T-cell (primary cell): ENCODE measurements at regions of chr13 and their contacts with region 1.

Region 1: DNA sequence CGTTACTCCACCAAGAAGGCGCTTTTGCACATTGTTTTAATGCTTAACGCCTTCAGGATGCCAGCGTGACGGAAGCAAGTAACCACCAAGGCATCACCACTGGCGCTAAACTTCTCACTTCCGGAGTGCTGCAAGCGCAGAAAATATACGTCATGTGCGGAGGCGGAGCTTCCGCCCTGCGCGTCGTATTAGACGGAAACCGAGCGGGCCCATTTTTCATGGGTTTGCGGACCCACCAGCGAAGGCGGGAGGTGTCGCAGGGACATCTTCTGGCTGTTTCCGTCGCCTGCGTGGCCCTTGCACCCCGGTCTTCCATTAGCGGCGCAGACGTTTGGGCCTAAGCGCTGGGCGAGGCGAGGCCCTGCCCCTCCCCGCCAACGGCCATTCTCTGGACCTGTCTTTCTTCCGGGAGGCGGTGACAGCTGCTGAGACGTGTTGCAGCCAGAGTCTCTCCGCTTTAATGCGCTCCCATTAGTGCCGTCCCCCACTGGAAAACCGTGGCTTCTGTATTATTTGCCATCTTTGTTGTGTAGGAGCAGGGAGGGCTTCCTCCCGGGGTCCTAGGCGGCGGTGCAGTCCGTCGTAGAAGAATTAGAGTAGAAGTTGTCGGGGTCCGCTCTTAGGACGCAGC is at the start of gene ERCC5:
- DNase-seq: peak; percentile 92 to 99 (median 95)
- ATAC-seq: peak; percentile 78 to 82 (median 80)
- H3K4me3 ChIP-seq: peak within 1 kb of the TSS; percentile 78 to 100
- H3K4me3 Mint-ChIP-seq: peak within 1 kb of the TSS; percentile 91 to 98 (median 93)
- H3K27ac ChIP-seq: peak within 1 kb of the TSS; percentile 98
- H3K27ac Mint-ChIP-seq: peak within 1 kb of the TSS; percentile 98 to 99
- H3K4me1 ChIP-seq: peaks cover 17 to 24% of the 10 kb centered on the region in 2 experiments
- H3K4me1 Mint-ChIP-seq: peaks cover 41 to 50% (median 49%) of the 10 kb centered on the region in 3 donors
- H3K27me3 ChIP-seq: no peaks in the 10 kb centered on the region
- H3K27me3 Mint-ChIP-seq: no peaks in the 10 kb centered on the region
- total RNA-seq, gene ERCC5: 104 to 123 (median 114) TPM

Region 2: DNA sequence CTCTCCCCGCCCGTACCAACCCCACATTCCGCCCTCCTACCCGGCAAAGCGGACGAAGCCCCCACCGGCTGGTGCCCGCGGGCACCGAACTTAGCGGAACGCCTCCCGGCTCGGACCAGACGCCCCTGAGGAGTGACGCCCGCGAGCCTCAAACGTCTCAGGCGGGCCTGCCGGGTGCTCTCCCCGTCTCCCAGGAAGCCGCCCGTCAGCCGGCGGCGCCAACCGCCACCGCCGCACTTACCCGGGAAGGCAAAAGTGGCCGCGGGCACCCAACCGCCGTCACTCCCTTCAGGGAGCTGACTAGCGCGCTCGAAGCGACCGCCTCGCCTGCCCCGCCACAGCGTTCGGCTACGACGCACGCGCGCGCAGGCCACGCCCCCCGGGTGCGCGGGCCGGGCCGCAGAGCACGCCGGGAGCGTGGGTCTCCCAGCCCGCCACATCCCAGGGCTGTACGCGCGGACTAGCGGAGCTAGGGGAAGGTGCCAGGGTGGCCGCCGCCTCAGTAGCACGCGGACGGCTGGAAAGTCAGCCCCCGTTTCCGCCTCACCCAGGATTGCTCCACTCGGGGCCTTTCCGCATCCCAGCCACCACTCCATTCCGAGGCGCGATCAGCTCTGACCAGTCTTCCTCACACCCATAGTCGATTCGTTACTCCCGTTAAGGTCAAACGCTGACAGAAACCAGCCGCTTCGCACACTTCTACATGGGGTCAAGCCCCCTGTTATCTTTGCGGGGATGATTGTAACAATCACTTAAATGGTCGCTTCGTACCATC is 72.1 kb before region 1 on chr13 and contains the start of gene TEX30:
- CTCF ChIA-PET with region 1: interaction called in 1 of 2 experiments, 6 read pairs
- POLR2A ChIA-PET with region 1: interaction called, 5 to 10 read pairs
- DNase-seq: peak; percentile 72 to 94 (median 82)
- ATAC-seq: peak; percentile 96 to 98 (median 97)
- H3K4me3 ChIP-seq: peak within 1 kb of the TSS; percentile 85 to 91
- H3K4me3 Mint-ChIP-seq: peak within 1 kb of the TSS; percentile 88 to 94 (median 89)
- H3K27ac ChIP-seq: peak within 1 kb of the TSS; percentile 82
- H3K27ac Mint-ChIP-seq: peak within 1 kb of the TSS; percentile 89 to 92
- H3K4me1 ChIP-seq: peaks cover 2 to 19% of the 10 kb centered on the region in 2 experiments
- H3K4me1 Mint-ChIP-seq: peaks cover 22 to 49% (median 47%) of the 10 kb centered on the region in 3 donors
- H3K27me3 ChIP-seq: no peaks in the 10 kb centered on the region
- H3K27me3 Mint-ChIP-seq: no peaks in the 10 kb centered on the region
- total RNA-seq, gene TEX30: 5.5 to 8.6 (median 7.8) TPM

Region 3: GRCh38 chr13:102870677-102871415 is 25.1 kb after region 1 on chr13:
- CTCF ChIA-PET with region 1: interaction called in 1 of 2 experiments, 10 read pairs
- POLR2A ChIA-PET with region 1: interaction called in 1 of 2 experiments, 3 read pairs
- DNase-seq: peak in 29 of 35 experiments; percentile 12 to 71 (median 34)
- ATAC-seq: peak; percentile 57 to 75 (median 68)
- H3K4me3 ChIP-seq: no peak overlapping the region
- H3K4me3 Mint-ChIP-seq: no peak overlapping the region
- H3K27ac ChIP-seq: no peak overlapping the region
- H3K27ac Mint-ChIP-seq: peak overlapping the region; percentile 28 to 58
- H3K4me1 ChIP-seq: peaks cover 0 to 11% of the 10 kb centered on the region in 2 experiments
- H3K4me1 Mint-ChIP-seq: peaks cover 30 to 36% (median 31%) of the 10 kb centered on the region in 3 donors
- H3K27me3 ChIP-seq: no peaks in the 10 kb centered on the region
- H3K27me3 Mint-ChIP-seq: no peaks in the 10 kb centered on the region